Colonic mucosa (tissue), 4 donors: ENCODE measurements at regions of chr10 and their contacts with region 1.

Region 1: DNA sequence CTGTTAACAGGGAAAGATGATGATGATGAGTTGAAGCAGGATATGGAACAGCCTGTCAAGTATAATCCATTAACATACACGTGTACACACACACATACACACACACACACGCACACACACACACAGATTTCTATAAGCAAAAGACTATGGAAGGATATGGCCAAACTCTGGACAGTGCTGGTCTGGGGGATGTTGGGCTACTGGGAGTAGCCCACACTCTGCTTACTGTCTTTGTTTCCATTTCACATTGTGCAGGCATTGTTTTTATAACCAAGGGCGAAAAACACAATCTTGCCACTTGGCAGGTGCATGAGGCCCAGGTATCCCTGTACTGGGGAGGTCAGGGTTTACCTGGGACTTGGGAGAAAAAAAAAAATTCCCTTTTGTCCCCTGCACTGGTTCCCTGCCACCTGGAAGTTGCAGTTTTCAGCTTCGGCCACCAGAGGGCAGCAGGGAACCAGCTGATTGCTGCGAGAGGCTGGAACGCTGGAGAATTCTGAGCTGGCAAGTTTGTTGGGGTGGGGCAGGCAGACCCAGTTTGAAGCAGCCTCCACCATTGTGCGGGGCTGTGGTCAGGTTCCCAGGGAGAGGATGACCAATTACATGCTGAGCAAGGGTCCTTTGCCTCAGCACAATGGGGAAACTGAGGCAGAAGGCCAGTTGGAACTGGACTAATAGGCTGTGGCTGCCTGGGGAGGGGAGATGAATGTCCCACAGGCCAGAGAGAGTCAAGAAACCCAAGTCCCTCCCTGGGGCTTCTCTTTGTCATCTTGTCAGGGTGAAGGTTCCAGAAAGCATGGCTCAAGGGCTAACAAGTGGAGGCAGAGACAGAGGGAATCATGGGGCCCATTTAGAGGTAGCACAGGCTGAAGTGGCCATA is 27.3 kb downstream of the PPIF start:
- DNase-seq: peak; percentile 86
- H3K4me3 ChIP-seq: no peak overlapping the region
- H3K27ac ChIP-seq: no peak overlapping the region
- H3K4me1 ChIP-seq: peaks cover under 1% of the 10 kb centered on the region
- H3K27me3 ChIP-seq: no peaks in the 10 kb centered on the region
- CTCF ChIP-seq: peak; percentile 99

Region 2: DNA sequence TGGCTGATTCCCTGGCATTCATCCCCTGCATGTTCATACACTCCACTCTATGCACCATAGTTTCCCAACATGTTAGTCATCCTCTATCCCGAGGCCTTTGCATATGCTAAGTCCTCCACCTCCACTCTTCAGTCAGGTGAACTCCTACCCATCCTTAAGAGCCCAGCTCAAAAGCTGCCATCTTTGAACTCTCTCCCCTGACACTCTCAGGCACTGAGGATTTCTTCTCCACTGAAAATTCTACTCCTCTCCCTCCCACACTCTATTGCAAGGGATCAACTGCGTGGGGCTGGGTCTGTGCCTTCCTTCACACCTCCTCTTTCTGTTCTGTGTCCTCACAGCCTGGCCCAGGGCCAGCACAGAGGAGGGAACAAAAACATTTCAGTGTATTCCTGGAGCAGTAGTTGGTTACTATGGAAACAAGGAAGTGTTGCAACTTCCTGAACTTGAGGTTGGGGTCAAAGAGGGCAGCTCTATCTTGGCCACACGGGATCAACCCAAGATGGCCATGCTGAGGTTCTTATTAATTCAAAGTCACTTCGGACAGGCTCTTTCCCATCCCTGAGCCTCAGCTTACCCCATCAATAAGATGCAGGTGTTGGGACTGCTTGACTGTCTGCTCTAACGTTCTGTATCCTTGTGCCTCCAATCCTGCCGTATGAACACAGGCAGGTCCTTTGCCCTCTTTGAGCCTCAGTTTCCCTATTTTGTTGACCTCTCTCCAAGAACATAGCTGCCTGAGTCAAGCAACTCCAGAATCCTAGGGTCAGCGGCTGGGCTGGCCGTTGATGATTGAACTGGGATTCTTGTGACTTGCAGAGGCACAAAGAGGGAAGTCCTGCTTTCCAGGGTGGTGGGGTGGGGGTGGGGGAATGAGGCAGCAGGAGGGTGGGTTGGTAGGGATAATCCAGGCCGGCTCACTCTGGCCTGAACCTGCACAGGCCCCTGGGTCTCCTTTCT is 290.3 kb before region 1 on chr10:
- intact Hi-C with region 1: no loop called
- DNase-seq: peak; percentile 93
- H3K4me3 ChIP-seq: no peak overlapping the region
- H3K27ac ChIP-seq: peak overlapping the region; percentile 57
- H3K4me1 ChIP-seq: peaks cover 53% of the 10 kb centered on the region
- H3K27me3 ChIP-seq: no peaks in the 10 kb centered on the region
- CTCF ChIP-seq: no peak

Region 3: DNA sequence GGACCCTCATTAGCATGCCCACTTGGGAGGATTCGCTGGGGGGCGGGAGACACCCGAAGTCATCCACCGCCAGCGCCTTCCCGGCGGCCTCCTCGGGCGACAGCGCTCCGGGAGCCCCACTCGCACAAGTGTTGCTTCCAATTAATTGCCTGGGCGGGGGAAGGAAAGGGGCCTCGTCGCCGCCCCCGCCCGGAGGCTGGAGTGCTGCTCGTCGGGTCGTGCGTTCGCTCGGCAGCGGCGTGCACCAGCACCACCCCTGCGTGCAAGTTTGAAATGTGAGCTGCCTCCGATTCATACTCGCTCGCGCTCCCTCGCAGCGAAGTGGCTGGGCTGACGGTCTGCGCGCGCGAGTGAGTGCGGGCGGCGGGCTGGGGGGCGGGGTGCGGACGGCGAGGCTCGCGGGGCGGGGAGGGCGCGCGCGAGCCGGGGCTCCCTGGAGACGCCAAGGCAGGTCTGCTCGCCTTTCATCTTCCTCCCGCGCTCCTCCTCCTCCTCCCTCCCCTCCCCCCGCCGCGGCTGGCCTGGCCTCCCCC is 131.9 kb before region 1 on chr10:
- intact Hi-C with region 1: no loop called
- DNase-seq: no peak
- H3K4me3 ChIP-seq: peak overlapping the region; percentile 42
- H3K27ac ChIP-seq: peak overlapping the region; percentile 66
- H3K4me1 ChIP-seq: peaks cover 14% of the 10 kb centered on the region
- H3K27me3 ChIP-seq: no peaks in the 10 kb centered on the region
- CTCF ChIP-seq: no peak

Region 4: GRCh38 chr10:79468024-79468560 is 93.5 kb after region 1 on chr10:
- intact Hi-C with region 1: loop called (anchors 5 kb)
- DNase-seq: no peak
- H3K4me3 ChIP-seq: no peak overlapping the region
- H3K27ac ChIP-seq: no peak overlapping the region
- H3K4me1 ChIP-seq: no peaks in the 10 kb centered on the region
- H3K27me3 ChIP-seq: no peaks in the 10 kb centered on the region
- CTCF ChIP-seq: no peak

Region 5: GRCh38 chr10:79487296-79488194 is 113.0 kb after region 1 on chr10:
- intact Hi-C with region 1: loop called (anchors 1 kb)
- DNase-seq: peak; percentile 49
- H3K4me3 ChIP-seq: no peak overlapping the region
- H3K27ac ChIP-seq: peak overlapping the region; percentile 39
- H3K4me1 ChIP-seq: no peaks in the 10 kb centered on the region
- H3K27me3 ChIP-seq: no peaks in the 10 kb centered on the region
- CTCF ChIP-seq: peak; percentile 73